B cell (primary cell): ENCODE measurements at regions of chr5 and their contacts with region 1.

Region 1: DNA sequence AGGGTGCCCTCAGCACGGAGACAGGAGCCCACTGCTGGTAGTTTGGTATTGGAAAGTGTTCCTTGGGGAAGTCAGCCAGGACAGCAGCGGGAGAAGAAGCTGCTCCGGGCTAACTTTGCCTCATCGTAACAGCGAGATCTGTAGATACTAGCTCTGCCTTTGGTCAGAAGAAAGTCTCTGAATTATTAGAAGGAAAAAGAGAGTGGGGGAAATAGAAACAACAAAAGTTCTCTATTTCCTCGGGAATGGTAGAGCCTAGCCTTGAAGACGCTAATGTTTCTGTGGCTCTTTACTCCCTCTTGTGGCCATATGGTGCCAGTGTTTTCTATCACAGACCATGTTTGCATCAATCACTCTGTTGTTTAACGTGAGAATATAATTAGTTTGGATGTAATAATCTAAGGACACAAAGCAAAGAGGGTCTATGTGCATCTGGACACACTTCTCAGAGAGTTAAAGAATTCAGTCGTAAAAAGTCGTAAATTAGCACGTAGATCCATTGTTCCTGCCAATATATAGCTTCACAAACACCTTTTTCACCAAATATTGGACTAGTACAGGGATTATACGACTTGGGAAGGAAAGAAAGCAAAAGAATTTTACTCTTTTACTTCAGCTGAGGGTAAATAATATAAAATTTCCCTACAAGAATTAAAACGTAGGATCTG is 40.2 kb upstream of the HSD17B4 start:
- DNase-seq: peak; percentile 85
- ATAC-seq: peak; percentile 74
- H3K4me3 ChIP-seq: peak overlapping the region; percentile 50 to 79 (median 70)
- H3K4me3 Mint-ChIP-seq: peak overlapping the region; percentile 91
- H3K27ac ChIP-seq: peak overlapping the region; percentile 55 to 67
- H3K27ac Mint-ChIP-seq: peak overlapping the region; percentile 88
- H3K4me1 ChIP-seq: peaks cover 62 to 65% of the 10 kb centered on the region in 2 donors
- H3K4me1 Mint-ChIP-seq: peaks cover 75% of the 10 kb centered on the region
- H3K27me3 ChIP-seq: no peaks in the 10 kb centered on the region
- H3K27me3 Mint-ChIP-seq: no peaks in the 10 kb centered on the region
- CTCF ChIP-seq: peak; percentile 94

Region 2: DNA sequence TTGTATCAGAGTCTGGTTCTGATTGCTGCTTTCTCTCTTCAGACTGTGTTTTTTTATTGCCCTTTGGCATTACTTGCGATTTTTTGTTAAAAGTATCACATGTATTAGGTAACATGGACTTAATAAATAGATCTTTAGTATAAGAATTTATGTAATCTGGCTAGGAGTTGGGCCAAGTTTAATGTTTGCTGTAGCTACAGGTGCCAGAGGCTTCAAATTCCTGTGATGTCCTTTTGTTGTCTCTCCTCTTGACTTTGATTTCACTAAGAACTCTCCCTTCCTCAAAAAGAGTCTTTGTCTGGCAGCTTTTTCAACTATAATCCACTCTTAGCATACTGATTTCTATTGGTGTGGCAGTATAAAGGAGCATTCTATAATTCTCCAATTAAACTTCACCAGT is 736.8 kb before region 1 on chr5:
- CTCF ChIA-PET with region 1: no interaction called
- POLR2A ChIA-PET with region 1: no interaction called
- intact Hi-C with region 1: no loop called
- DNase-seq: no peak
- ATAC-seq: no peak
- H3K4me3 ChIP-seq: no peak overlapping the region
- H3K4me3 Mint-ChIP-seq: no peak overlapping the region
- H3K27ac ChIP-seq: no peak overlapping the region
- H3K27ac Mint-ChIP-seq: no peak overlapping the region
- H3K4me1 ChIP-seq: no peaks in the 10 kb centered on the region
- H3K4me1 Mint-ChIP-seq: no peaks in the 10 kb centered on the region
- H3K27me3 ChIP-seq: no peaks in the 10 kb centered on the region
- H3K27me3 Mint-ChIP-seq: no peaks in the 10 kb centered on the region
- CTCF ChIP-seq: no peak

Region 3: GRCh38 chr5:119070828-119071572 is 341.1 kb before region 1 on chr5 and contains the start of gene DMXL1:
- CTCF ChIA-PET with region 1: interaction called, 3 read pairs
- POLR2A ChIA-PET with region 1: no interaction called
- intact Hi-C with region 1: loop called (anchors 1 kb)
- DNase-seq: peak; percentile 99
- ATAC-seq: peak; percentile 81
- H3K4me3 ChIP-seq: peak within 1 kb of the TSS; percentile 66 to 98 (median 91)
- H3K4me3 Mint-ChIP-seq: peak within 1 kb of the TSS; percentile 99
- H3K27ac ChIP-seq: peak within 1 kb of the TSS; percentile 94 to 97
- H3K27ac Mint-ChIP-seq: peak within 1 kb of the TSS; percentile 100
- H3K4me1 ChIP-seq: peaks cover 35 to 43% of the 10 kb centered on the region in 2 donors
- H3K4me1 Mint-ChIP-seq: peaks cover 40% of the 10 kb centered on the region
- H3K27me3 ChIP-seq: no peaks in the 10 kb centered on the region
- H3K27me3 Mint-ChIP-seq: no peaks in the 10 kb centered on the region
- CTCF ChIP-seq: no peak
- total RNA-seq, gene DMXL1: 129 and 135 TPM in 2 replicates

Region 4: DNA sequence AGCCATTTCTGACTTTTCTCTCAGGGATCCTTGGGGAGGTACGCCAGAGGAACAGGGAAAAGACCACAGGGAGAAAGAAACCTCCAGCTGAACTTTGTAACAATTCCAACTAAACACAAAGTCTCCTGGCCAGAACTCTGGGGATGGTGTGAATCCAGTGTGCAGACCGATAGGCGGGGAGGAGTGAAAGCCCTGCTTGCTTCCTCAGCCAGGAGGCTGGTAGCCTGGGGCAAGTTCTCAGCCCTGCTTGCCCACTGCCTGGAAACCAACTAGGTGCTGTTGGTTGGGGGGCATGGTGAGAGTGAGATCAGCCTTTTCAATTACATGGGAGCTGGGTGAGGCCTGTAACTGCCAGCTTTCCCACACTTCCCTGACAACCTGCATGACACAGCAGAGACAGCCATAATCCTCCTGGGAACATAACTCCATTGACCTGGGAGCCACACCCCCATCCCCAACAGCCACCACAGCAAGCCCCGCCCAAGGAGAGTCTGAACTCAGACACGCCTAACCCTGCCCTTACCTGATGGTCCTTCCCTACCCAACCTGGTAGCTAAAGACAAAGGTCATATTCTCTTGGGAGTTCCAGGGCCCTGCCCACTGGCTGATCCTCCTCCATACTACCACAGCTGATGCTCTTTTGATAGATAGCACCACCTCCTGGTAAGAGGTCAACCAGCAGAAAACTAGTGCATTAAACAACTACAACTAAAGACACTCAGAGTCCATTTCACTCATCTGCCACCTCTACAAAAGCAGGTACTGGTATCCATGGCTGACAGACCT is 156.3 kb before region 1 on chr5:
- CTCF ChIA-PET with region 1: interaction called, 11 read pairs
- POLR2A ChIA-PET with region 1: no interaction called
- intact Hi-C with region 1: no loop called
- DNase-seq: peak; percentile 24
- ATAC-seq: no peak
- H3K4me3 ChIP-seq: no peak overlapping the region
- H3K4me3 Mint-ChIP-seq: no peak overlapping the region
- H3K27ac ChIP-seq: no peak overlapping the region
- H3K27ac Mint-ChIP-seq: peak overlapping the region; percentile 26
- H3K4me1 ChIP-seq: no peaks in the 10 kb centered on the region
- H3K4me1 Mint-ChIP-seq: peaks cover 3% of the 10 kb centered on the region
- H3K27me3 ChIP-seq: no peaks in the 10 kb centered on the region
- H3K27me3 Mint-ChIP-seq: no peaks in the 10 kb centered on the region
- CTCF ChIP-seq: peak; percentile 8

Region 5: GRCh38 chr5:119290161-119290569 is 121.9 kb before region 1 on chr5:
- CTCF ChIA-PET with region 1: interaction called, 21 read pairs
- POLR2A ChIA-PET with region 1: no interaction called
- intact Hi-C with region 1: no loop called
- DNase-seq: peak; percentile 78
- ATAC-seq: peak; percentile 88
- H3K4me3 ChIP-seq: peak overlapping the region in 3 of 5 experiments; percentile 13 to 20 (median 18)
- H3K4me3 Mint-ChIP-seq: peak overlapping the region; percentile 65
- H3K27ac ChIP-seq: peak overlapping the region; percentile 35 to 74
- H3K27ac Mint-ChIP-seq: peak overlapping the region; percentile 90
- H3K4me1 ChIP-seq: peaks cover 70 to 76% of the 10 kb centered on the region in 2 donors
- H3K4me1 Mint-ChIP-seq: peaks cover 83% of the 10 kb centered on the region
- H3K27me3 ChIP-seq: no peaks in the 10 kb centered on the region
- H3K27me3 Mint-ChIP-seq: no peaks in the 10 kb centered on the region
- CTCF ChIP-seq: no peak

Region 6: GRCh38 chr5:119340597-119341218 is 71.4 kb before region 1 on chr5:
- CTCF ChIA-PET with region 1: interaction called, 119 read pairs
- POLR2A ChIA-PET with region 1: interaction called, 3 read pairs
- intact Hi-C with region 1: loop called (anchors 1 kb)
- DNase-seq: peak; percentile 68
- ATAC-seq: peak; percentile 22
- H3K4me3 ChIP-seq: peak overlapping the region in 4 of 5 experiments; percentile 5 to 45 (median 22)
- H3K4me3 Mint-ChIP-seq: peak overlapping the region; percentile 85
- H3K27ac ChIP-seq: peak overlapping the region; percentile 87 to 91
- H3K27ac Mint-ChIP-seq: peak overlapping the region; percentile 95
- H3K4me1 ChIP-seq: peaks cover 95 to 96% of the 10 kb centered on the region in 2 donors
- H3K4me1 Mint-ChIP-seq: peaks cover 94% of the 10 kb centered on the region
- H3K27me3 ChIP-seq: no peaks in the 10 kb centered on the region
- H3K27me3 Mint-ChIP-seq: no peaks in the 10 kb centered on the region
- CTCF ChIP-seq: no peak

Region 7: DNA sequence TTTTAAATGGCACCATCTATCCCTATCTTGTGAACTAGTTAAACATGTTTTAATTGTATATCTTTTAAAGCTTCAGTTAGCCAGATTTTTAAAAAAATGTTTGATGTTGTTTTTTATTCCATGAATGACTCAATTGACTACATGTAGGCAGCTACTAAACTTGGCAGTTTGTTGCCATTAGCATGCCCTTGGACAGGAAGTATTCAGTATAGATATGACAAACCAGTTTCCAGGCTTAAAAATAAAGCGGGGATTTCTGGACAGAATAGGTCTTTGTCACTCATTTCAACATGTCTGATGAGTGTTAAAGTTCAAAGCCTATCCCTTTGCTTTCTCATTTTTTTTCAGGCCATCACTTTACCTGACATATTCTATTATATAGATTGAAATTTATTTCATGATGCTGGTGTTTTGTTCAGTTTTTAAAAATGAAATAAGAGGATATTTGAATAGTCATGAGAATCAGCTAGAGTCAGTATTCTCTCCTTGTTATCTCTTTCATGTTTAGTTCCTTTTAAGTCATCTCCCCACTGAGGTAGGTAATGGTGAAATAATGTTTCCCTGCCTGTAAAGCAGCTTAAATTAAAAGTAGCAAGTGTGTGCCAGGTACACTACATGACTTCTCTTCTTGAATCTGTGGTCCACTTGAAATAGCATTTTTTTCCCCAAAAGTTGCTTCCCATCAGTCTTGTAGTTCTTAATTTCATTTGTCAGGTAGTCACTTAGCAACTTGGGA is 44.4 kb before region 1 on chr5:
- CTCF ChIA-PET with region 1: interaction called, 92 read pairs
- POLR2A ChIA-PET with region 1: no interaction called
- intact Hi-C with region 1: no loop called
- DNase-seq: peak; percentile 49
- ATAC-seq: peak; percentile 55
- H3K4me3 ChIP-seq: peak overlapping the region in 3 of 5 experiments; percentile 9 to 40 (median 13)
- H3K4me3 Mint-ChIP-seq: peak overlapping the region; percentile 68
- H3K27ac ChIP-seq: peak overlapping the region; percentile 67 to 79
- H3K27ac Mint-ChIP-seq: peak overlapping the region; percentile 92
- H3K4me1 ChIP-seq: peaks cover 82 to 88% of the 10 kb centered on the region in 2 donors
- H3K4me1 Mint-ChIP-seq: peaks cover 83% of the 10 kb centered on the region
- H3K27me3 ChIP-seq: no peaks in the 10 kb centered on the region
- H3K27me3 Mint-ChIP-seq: no peaks in the 10 kb centered on the region
- CTCF ChIP-seq: no peak

Region 8: DNA sequence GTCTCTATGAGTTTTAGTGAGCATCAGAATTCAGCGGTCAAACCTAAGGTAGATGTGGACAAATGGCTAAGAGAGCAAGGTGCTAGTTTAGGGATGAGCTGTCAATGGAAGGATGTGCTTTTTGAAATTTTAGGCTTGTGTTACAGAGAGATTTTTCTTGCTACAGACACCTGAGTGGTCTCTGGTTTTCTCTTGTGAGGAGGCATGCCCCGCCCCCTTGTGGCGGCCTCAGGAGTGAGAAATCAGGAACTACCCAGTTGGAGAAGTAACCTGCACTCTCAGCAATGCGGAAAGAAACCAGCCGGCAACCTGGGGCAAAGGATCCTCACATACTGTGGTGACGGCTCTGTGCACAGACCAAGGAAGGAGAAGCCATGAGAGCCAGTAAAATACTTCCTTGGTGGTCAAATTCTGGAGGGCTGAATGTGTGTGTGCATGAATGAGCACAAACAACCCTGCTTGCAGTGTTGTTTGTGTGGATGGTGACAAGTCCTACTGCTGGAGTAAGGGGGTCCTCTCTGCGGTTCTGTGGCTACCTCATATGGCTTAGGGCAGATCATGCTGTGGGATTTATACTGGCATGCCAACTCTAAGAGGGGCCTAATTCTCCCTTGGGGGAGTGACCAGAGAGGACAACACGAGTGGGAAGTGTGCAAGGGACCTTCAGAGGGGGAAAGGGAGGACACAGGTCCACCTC is 23.5 kb after region 1 on chr5:
- CTCF ChIA-PET with region 1: interaction called, 65 read pairs
- POLR2A ChIA-PET with region 1: no interaction called
- intact Hi-C with region 1: no loop called
- DNase-seq: peak; percentile 89
- ATAC-seq: peak; percentile 92
- H3K4me3 ChIP-seq: peak overlapping the region in 1 of 5 experiments; percentile 5
- H3K4me3 Mint-ChIP-seq: peak overlapping the region; percentile 46
- H3K27ac ChIP-seq: no peak overlapping the region
- H3K27ac Mint-ChIP-seq: peak overlapping the region; percentile 5
- H3K4me1 ChIP-seq: peaks cover 14 to 20% of the 10 kb centered on the region in 2 donors
- H3K4me1 Mint-ChIP-seq: peaks cover 28% of the 10 kb centered on the region
- H3K27me3 ChIP-seq: no peaks in the 10 kb centered on the region
- H3K27me3 Mint-ChIP-seq: no peaks in the 10 kb centered on the region
- CTCF ChIP-seq: peak; percentile 82

Region 9: GRCh38 chr5:119954106-119954505 is 542.0 kb after region 1 on chr5:
- CTCF ChIA-PET with region 1: no interaction called
- POLR2A ChIA-PET with region 1: no interaction called
- intact Hi-C with region 1: no loop called
- DNase-seq: no peak
- ATAC-seq: no peak
- H3K4me3 ChIP-seq: no peak overlapping the region
- H3K4me3 Mint-ChIP-seq: no peak overlapping the region
- H3K27ac ChIP-seq: no peak overlapping the region
- H3K27ac Mint-ChIP-seq: no peak overlapping the region
- H3K4me1 ChIP-seq: no peaks in the 10 kb centered on the region
- H3K4me1 Mint-ChIP-seq: no peaks in the 10 kb centered on the region
- H3K27me3 ChIP-seq: no peaks in the 10 kb centered on the region
- H3K27me3 Mint-ChIP-seq: no peaks in the 10 kb centered on the region
- CTCF ChIP-seq: no peak